ENCODE measurements at regions of chr19 and their contacts with region 1.

Region 1: DNA sequence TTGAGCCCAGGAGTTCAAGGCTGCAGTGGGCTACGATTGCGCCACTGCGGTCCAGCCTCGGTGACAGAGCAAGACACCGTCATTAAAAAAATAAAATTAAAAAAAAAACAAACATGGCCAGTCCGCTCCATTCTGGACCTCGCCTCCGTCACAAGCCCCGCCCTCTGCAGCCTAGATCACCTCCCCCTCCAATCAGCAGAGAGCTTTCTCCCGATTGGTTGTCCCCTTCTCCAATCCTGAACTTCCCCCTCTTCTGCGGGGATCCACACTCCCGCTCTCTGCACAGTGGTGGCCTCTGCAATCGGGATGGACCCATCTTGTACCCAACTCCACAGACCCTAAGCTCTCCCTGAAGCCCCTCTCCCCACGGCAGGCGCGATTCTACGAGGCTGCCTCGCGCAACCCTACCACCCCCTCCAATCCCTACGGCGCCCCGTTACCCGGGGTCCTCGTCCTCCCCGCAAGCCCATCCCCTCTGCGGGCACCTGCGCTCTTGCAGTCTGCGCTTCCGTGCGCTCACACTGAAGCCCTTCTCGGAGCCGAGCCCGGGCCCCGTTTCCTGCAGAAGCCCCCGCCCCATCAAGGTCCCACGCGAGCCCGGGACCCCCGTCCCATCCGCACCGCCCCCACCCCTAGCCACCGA is 540 bp downstream of the TMEM160 start:
- DNase-seq: peak; percentile 78
- ATAC-seq: peak; percentile 19
- H3K4me3 ChIP-seq: peak overlapping the region; percentile 55 to 94 (median 84)
- H3K4me3 Mint-ChIP-seq: peak overlapping the region; percentile 96
- H3K27ac ChIP-seq: peak overlapping the region; percentile 8 to 74
- H3K27ac Mint-ChIP-seq: peak overlapping the region; percentile 90
- H3K4me1 ChIP-seq: peaks cover 6 to 17% of the 10 kb centered on the region in 2 donors
- H3K4me1 Mint-ChIP-seq: peaks cover 11% of the 10 kb centered on the region
- H3K27me3 ChIP-seq: no peaks in the 10 kb centered on the region
- H3K27me3 Mint-ChIP-seq: no peaks in the 10 kb centered on the region
- CTCF ChIP-seq: no peak

Region 2: DNA sequence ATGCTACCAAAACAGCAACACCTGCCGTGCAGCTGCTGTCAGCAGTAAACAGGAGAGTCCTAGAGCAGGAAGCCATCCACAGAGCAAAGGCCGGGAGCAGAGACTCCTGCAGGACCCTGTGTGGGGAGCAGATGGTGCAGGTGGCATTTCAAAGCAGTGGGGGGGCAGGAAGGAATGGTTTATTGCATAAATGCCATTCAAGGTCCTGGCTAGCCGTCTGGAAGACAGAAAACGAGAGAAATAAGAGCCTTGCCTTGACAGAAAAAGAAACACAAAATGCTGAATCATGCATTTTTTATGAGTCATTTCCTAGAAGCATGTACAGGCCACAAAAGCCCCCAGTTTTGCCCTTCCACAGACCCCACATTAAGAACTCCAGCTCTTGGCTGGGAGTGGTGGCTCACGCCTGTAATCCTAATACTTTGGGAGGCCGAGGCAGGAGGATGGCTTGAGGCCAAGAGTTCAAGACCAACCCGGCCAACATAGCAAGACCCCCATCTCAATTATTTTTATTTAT is 1238.2 kb before region 1 on chr19:
- CTCF ChIA-PET with region 1: no interaction called
- POLR2A ChIA-PET with region 1: interaction called, 10 read pairs
- intact Hi-C with region 1: no loop called
- DNase-seq: no peak
- ATAC-seq: no peak
- H3K4me3 ChIP-seq: no peak overlapping the region
- H3K4me3 Mint-ChIP-seq: no peak overlapping the region
- H3K27ac ChIP-seq: no peak overlapping the region
- H3K27ac Mint-ChIP-seq: no peak overlapping the region
- H3K4me1 ChIP-seq: peaks cover 2% of the 10 kb centered on the region in 2 donors
- H3K4me1 Mint-ChIP-seq: peaks cover 2% of the 10 kb centered on the region
- H3K27me3 ChIP-seq: peaks cover 0 to 5% (median 2%) of the 10 kb centered on the region in 4 experiments
- H3K27me3 Mint-ChIP-seq: peaks cover 3% of the 10 kb centered on the region
- CTCF ChIP-seq: no peak

Region 3: GRCh38 chr19:46850228-46851203 is 197.4 kb before region 1 on chr19 and contains the start of gene AP2S1:
- CTCF ChIA-PET with region 1: no interaction called
- POLR2A ChIA-PET with region 1: no interaction called
- intact Hi-C with region 1: loop called (anchors 1 kb)
- DNase-seq: peak; percentile 95
- ATAC-seq: peak; percentile 93
- H3K4me3 ChIP-seq: peak within 1 kb of the TSS; percentile 59 to 89 (median 82)
- H3K4me3 Mint-ChIP-seq: peak within 1 kb of the TSS; percentile 98
- H3K27ac ChIP-seq: peak within 1 kb of the TSS; percentile 58 to 81
- H3K27ac Mint-ChIP-seq: peak within 1 kb of the TSS; percentile 86
- H3K4me1 ChIP-seq: peaks cover 17 to 24% of the 10 kb centered on the region in 2 donors
- H3K4me1 Mint-ChIP-seq: peaks cover 32% of the 10 kb centered on the region
- H3K27me3 ChIP-seq: no peaks in the 10 kb centered on the region
- H3K27me3 Mint-ChIP-seq: no peaks in the 10 kb centered on the region
- CTCF ChIP-seq: no peak
- total RNA-seq, gene AP2S1: 47.2 and 49.3 TPM in 2 replicates

Region 4: GRCh38 chr19:46990991-46991676 is 56.8 kb before region 1 on chr19:
- CTCF ChIA-PET with region 1: no interaction called
- POLR2A ChIA-PET with region 1: no interaction called
- intact Hi-C with region 1: no loop called
- DNase-seq: peak; percentile 51
- ATAC-seq: no peak
- H3K4me3 ChIP-seq: no peak overlapping the region
- H3K4me3 Mint-ChIP-seq: no peak overlapping the region
- H3K27ac ChIP-seq: no peak overlapping the region
- H3K27ac Mint-ChIP-seq: no peak overlapping the region
- H3K4me1 ChIP-seq: peaks cover 6 to 8% of the 10 kb centered on the region in 2 donors
- H3K4me1 Mint-ChIP-seq: peaks cover 10% of the 10 kb centered on the region
- H3K27me3 ChIP-seq: no peaks in the 10 kb centered on the region
- H3K27me3 Mint-ChIP-seq: no peaks in the 10 kb centered on the region
- CTCF ChIP-seq: peak; percentile 61

Region 5: GRCh38 chr19:47130591-47131227 is 82.8 kb after region 1 on chr19 and contains the start of gene SAE1:
- CTCF ChIA-PET with region 1: no interaction called
- POLR2A ChIA-PET with region 1: interaction called, 11 read pairs
- intact Hi-C with region 1: loop called (anchors 1 kb)
- DNase-seq: peak; percentile 97
- ATAC-seq: peak; percentile 89
- H3K4me3 ChIP-seq: peak within 1 kb of the TSS; percentile 50 to 98 (median 88)
- H3K4me3 Mint-ChIP-seq: peak within 1 kb of the TSS; percentile 97
- H3K27ac ChIP-seq: peak within 1 kb of the TSS; percentile 76 to 89
- H3K27ac Mint-ChIP-seq: peak within 1 kb of the TSS; percentile 98
- H3K4me1 ChIP-seq: peaks cover 0 to 21% of the 10 kb centered on the region in 2 donors
- H3K4me1 Mint-ChIP-seq: peaks cover 39% of the 10 kb centered on the region
- H3K27me3 ChIP-seq: no peaks in the 10 kb centered on the region
- H3K27me3 Mint-ChIP-seq: no peaks in the 10 kb centered on the region
- CTCF ChIP-seq: peak; percentile 65
- total RNA-seq, gene SAE1: 41.0 and 45.1 TPM in 2 replicates

Region 6: GRCh38 chr19:47745010-47745901 is 697.4 kb after region 1 on chr19 and contains the start of gene NOP53:
- CTCF ChIA-PET with region 1: no interaction called
- POLR2A ChIA-PET with region 1: interaction called, 12 read pairs
- intact Hi-C with region 1: no loop called
- DNase-seq: peak; percentile 98
- ATAC-seq: peak; percentile 80
- H3K4me3 ChIP-seq: peak within 1 kb of the TSS; percentile 51 to 97 (median 85)
- H3K4me3 Mint-ChIP-seq: peak within 1 kb of the TSS; percentile 100
- H3K27ac ChIP-seq: peak within 1 kb of the TSS; percentile 93 to 99
- H3K27ac Mint-ChIP-seq: peak within 1 kb of the TSS; percentile 100
- H3K4me1 ChIP-seq: peaks cover 31 to 59% of the 10 kb centered on the region in 2 donors
- H3K4me1 Mint-ChIP-seq: peaks cover 42% of the 10 kb centered on the region
- H3K27me3 ChIP-seq: no peaks in the 10 kb centered on the region
- H3K27me3 Mint-ChIP-seq: no peaks in the 10 kb centered on the region
- CTCF ChIP-seq: no peak
- total RNA-seq, gene NOP53: 921 and 978 TPM in 2 replicates